CD4-positive, alpha-beta memory T cell (primary cell): ENCODE measurements at regions of chr1 and their contacts with region 1.

Region 1: DNA sequence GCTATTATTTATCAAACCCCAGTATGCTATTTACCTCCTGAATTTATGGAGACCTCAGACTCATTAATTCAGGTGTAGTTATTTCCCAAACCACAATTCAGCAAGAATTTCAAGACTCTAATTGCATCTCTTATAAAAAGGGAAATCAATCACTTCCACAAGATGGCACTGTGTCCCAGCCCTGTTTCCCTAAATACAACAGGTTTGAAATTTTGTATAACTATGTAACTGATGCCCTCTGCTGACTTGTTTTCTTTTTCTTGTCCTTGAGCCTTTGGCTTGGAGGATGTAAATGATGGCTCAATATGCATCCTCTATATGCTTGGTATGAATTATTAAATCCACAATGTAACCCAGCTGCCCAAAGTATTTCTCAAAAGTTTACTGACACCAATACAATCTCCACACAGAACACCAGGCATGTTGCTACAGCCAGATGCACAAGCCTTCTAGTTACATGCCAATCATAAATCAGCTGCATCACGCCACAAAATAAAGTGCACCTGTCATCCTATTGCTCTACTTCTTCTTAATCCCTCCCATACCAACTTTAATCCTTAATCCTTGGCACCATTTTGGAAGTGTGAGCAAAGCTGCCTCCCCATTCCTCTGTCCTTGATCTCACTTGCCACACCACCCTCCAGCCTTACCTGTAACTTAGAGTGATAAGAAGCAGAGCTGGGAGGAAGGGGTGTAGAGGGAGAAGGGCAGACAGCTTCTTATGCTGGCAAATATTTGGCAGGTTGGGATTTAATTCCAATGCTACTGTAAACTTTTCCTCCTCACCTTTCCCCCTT is 9.0 kb downstream of the C1orf105 start:
- DNase-seq: peak; percentile 49 to 63 (median 56)
- H3K4me3 ChIP-seq: no peak overlapping the region
- H3K4me3 Mint-ChIP-seq: peak overlapping the region in 2 of 8 donors; percentile 26 to 39
- H3K27ac ChIP-seq: no peak overlapping the region
- H3K27ac Mint-ChIP-seq: peak overlapping the region in 6 of 7 donors; percentile 5 to 72 (median 56)
- H3K4me1 ChIP-seq: peaks cover 59% of the 10 kb centered on the region
- H3K4me1 Mint-ChIP-seq: peaks cover 31 to 49% (median 41%) of the 10 kb centered on the region in 4 donors
- H3K27me3 ChIP-seq: no peaks in the 10 kb centered on the region
- H3K27me3 Mint-ChIP-seq: no peaks in the 10 kb centered on the region

Region 2: GRCh38 chr1:171644805-171645483 is 784.6 kb before region 1 on chr1:
- CTCF ChIA-PET with region 1: no interaction called
- POLR2A ChIA-PET with region 1: no interaction called
- intact Hi-C with region 1: loop called (anchors 10 kb)
- DNase-seq: peak; percentile 54 to 65 (median 56)
- H3K4me3 ChIP-seq: no peak overlapping the region
- H3K4me3 Mint-ChIP-seq: peak overlapping the region in 2 of 8 donors; percentile 15 to 48
- H3K27ac ChIP-seq: no peak overlapping the region
- H3K27ac Mint-ChIP-seq: peak overlapping the region in 2 of 7 donors; percentile 14 to 19
- H3K4me1 ChIP-seq: no peaks in the 10 kb centered on the region
- H3K4me1 Mint-ChIP-seq: peaks cover 6 to 12% (median 7%) of the 10 kb centered on the region in 4 donors
- H3K27me3 ChIP-seq: no peaks in the 10 kb centered on the region
- H3K27me3 Mint-ChIP-seq: peaks cover 3 to 9% of the 10 kb centered on the region in 2 donors

Region 3: DNA sequence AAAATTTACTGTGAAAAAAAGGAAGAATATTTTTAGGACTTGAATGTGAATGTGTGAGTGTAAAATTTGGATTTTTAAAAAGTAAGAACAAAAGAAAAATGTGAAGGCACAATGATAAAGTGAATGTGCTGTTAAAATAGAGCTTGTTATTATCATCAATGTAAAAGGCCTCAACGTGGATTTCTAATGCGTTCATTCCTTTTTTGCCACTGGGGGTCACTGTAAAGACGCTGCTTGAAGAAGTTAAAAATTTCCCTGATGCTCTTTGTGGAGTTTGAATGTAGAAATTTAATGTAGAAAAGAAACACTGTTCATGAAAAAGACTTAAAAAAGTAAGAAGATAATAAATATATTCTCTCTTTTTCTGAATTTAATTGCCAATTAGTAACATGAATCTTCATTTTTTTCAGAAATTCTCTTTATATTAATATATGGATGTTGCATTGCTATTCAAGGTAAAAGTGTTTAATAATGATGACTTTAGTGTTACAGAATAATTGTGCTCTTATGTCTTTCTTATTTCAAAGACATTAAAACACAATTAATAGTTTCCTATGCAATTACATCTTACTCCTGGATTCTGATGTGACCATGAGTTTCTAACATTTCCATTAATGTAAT is 426.7 kb before region 1 on chr1:
- CTCF ChIA-PET with region 1: interaction called, 56 read pairs
- POLR2A ChIA-PET with region 1: interaction called, 3 read pairs
- intact Hi-C with region 1: loop called (anchors 1 kb)
- DNase-seq: peak; percentile 30 to 46 (median 32)
- H3K4me3 ChIP-seq: no peak overlapping the region
- H3K4me3 Mint-ChIP-seq: no peak overlapping the region
- H3K27ac ChIP-seq: no peak overlapping the region
- H3K27ac Mint-ChIP-seq: no peak overlapping the region
- H3K4me1 ChIP-seq: no peaks in the 10 kb centered on the region
- H3K4me1 Mint-ChIP-seq: peaks cover 6 to 16% (median 8%) of the 10 kb centered on the region in 4 donors
- H3K27me3 ChIP-seq: no peaks in the 10 kb centered on the region
- H3K27me3 Mint-ChIP-seq: no peaks in the 10 kb centered on the region

Region 4: GRCh38 chr1:172089768-172090510 is 339.6 kb before region 1 on chr1:
- CTCF ChIA-PET with region 1: interaction called, 6 read pairs
- POLR2A ChIA-PET with region 1: no interaction called
- intact Hi-C with region 1: loop called (anchors 1 kb)
- DNase-seq: peak; percentile 42 to 57 (median 49)
- H3K4me3 ChIP-seq: no peak overlapping the region
- H3K4me3 Mint-ChIP-seq: peak overlapping the region in 1 of 8 donors; percentile 18
- H3K27ac ChIP-seq: no peak overlapping the region
- H3K27ac Mint-ChIP-seq: peak overlapping the region in 1 of 7 donors; percentile 73
- H3K4me1 ChIP-seq: no peaks in the 10 kb centered on the region
- H3K4me1 Mint-ChIP-seq: peaks cover 3 to 6% (median 4%) of the 10 kb centered on the region in 4 donors
- H3K27me3 ChIP-seq: no peaks in the 10 kb centered on the region
- H3K27me3 Mint-ChIP-seq: peaks cover 0 to 2% of the 10 kb centered on the region in 2 donors

Region 5: DNA sequence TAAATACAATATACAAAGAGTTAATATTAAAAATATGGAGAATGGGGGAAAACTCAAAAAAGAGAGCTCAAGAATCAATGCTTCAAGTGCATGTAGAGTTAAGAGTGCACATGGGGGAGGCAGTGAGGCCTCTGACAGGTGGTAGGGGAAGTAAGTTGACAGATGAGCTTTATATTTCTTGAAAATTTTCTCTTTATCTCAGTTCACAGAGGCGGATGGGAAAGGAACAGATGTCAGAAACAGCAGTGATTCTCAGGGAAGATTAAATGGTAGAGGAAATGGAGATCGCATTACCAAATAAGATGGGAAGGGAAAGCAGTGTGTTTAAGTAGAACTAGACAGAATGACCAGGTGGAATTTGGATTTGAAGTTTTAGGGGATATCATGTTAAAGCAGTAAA is 209.2 kb before region 1 on chr1:
- CTCF ChIA-PET with region 1: no interaction called
- POLR2A ChIA-PET with region 1: no interaction called
- intact Hi-C with region 1: no loop called
- DNase-seq: no peak
- H3K4me3 ChIP-seq: no peak overlapping the region
- H3K4me3 Mint-ChIP-seq: no peak overlapping the region
- H3K27ac ChIP-seq: no peak overlapping the region
- H3K27ac Mint-ChIP-seq: no peak overlapping the region
- H3K4me1 ChIP-seq: no peaks in the 10 kb centered on the region
- H3K4me1 Mint-ChIP-seq: no peaks in the 10 kb centered on the region
- H3K27me3 ChIP-seq: no peaks in the 10 kb centered on the region
- H3K27me3 Mint-ChIP-seq: no peaks in the 10 kb centered on the region

Region 6: GRCh38 chr1:172443626-172444453 is 14.3 kb after region 1 on chr1 and contains the start of gene PIGC:
- CTCF ChIA-PET with region 1: interaction called, 135 read pairs
- POLR2A ChIA-PET with region 1: interaction called, 24 read pairs
- intact Hi-C with region 1: loop called (anchors 1 kb)
- DNase-seq: peak; percentile 86 to 89 (median 87)
- H3K4me3 ChIP-seq: peak within 1 kb of the TSS; percentile 44 to 83
- H3K4me3 Mint-ChIP-seq: peak within 1 kb of the TSS; percentile 92 to 98 (median 96)
- H3K27ac ChIP-seq: peak within 1 kb of the TSS; percentile 67
- H3K27ac Mint-ChIP-seq: peak within 1 kb of the TSS; percentile 89 to 97 (median 95)
- H3K4me1 ChIP-seq: peaks cover 36% of the 10 kb centered on the region
- H3K4me1 Mint-ChIP-seq: peaks cover 32 to 49% (median 41%) of the 10 kb centered on the region in 4 donors
- H3K27me3 ChIP-seq: no peaks in the 10 kb centered on the region
- H3K27me3 Mint-ChIP-seq: no peaks in the 10 kb centered on the region
- total RNA-seq, gene PIGC: 48.9 to 49.2 TPM

Region 7: GRCh38 chr1:172449585-172450534 is 20.3 kb after region 1 on chr1:
- CTCF ChIA-PET with region 1: interaction called, 135 read pairs
- POLR2A ChIA-PET with region 1: interaction called, 21 read pairs
- intact Hi-C with region 1: no loop called
- DNase-seq: peak; percentile 26 to 46 (median 33)
- H3K4me3 ChIP-seq: no peak overlapping the region
- H3K4me3 Mint-ChIP-seq: peak overlapping the region in 7 of 8 donors; percentile 10 to 69 (median 39)
- H3K27ac ChIP-seq: no peak overlapping the region
- H3K27ac Mint-ChIP-seq: peak overlapping the region in 3 of 7 donors; percentile 34 to 84 (median 70)
- H3K4me1 ChIP-seq: peaks cover 21% of the 10 kb centered on the region
- H3K4me1 Mint-ChIP-seq: peaks cover 5 to 32% (median 20%) of the 10 kb centered on the region in 4 donors
- H3K27me3 ChIP-seq: no peaks in the 10 kb centered on the region
- H3K27me3 Mint-ChIP-seq: no peaks in the 10 kb centered on the region

Region 8: DNA sequence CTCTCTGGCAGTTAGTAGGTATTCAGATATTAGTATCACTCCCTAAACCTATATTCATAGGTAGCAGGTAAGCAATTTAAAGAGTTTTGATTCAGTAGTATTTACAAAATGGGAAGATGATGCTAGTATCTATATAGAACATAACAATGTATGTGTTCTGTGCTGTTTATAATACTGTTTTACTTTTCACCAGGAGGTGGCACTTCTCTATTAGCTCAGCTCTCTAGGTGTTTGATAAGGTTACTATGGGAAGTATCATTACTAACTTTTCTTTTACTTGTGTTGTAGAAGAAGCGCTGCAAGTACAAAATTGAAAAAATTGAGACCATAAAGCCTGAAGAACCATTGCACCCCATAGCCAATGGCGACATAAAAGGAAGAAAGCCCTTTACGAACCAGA is 180.0 kb after region 1 on chr1:
- CTCF ChIA-PET with region 1: no interaction called
- POLR2A ChIA-PET with region 1: no interaction called
- intact Hi-C with region 1: loop called (anchors 1 kb)
- DNase-seq: peak in 4 of 5 donors; percentile 34 to 41 (median 38)
- H3K4me3 ChIP-seq: no peak overlapping the region
- H3K4me3 Mint-ChIP-seq: no peak overlapping the region
- H3K27ac ChIP-seq: no peak overlapping the region
- H3K27ac Mint-ChIP-seq: peak overlapping the region in 1 of 7 donors; percentile 43
- H3K4me1 ChIP-seq: no peaks in the 10 kb centered on the region
- H3K4me1 Mint-ChIP-seq: peaks cover 4 to 9% (median 6%) of the 10 kb centered on the region in 4 donors
- H3K27me3 ChIP-seq: no peaks in the 10 kb centered on the region
- H3K27me3 Mint-ChIP-seq: no peaks in the 10 kb centered on the region